Activated B cell treated with CpG ODN at 0.5 μM for 24 hours (primary cell): ENCODE measurements at regions of chr6 and their contacts with region 1.

Region 1: GRCh38 chr6:107674995-107675738 is 148.9 kb downstream of the SCML4 start:
- DNase-seq: peak; percentile 78
- ATAC-seq: peak; percentile 91
- H3K4me3 Mint-ChIP-seq: peak overlapping the region; percentile 82
- H3K27ac Mint-ChIP-seq: peak overlapping the region; percentile 95
- H3K4me1 Mint-ChIP-seq: peaks cover 28% of the 10 kb centered on the region
- H3K27me3 Mint-ChIP-seq: peaks cover 3% of the 10 kb centered on the region
- CTCF ChIP-seq: peak; percentile 67

Region 2: GRCh38 chr6:107033126-107033525 is 642.0 kb before region 1 on chr6:
- CTCF ChIA-PET with region 1: no interaction called
- POLR2A ChIA-PET with region 1: no interaction called
- intact Hi-C with region 1: loop called (anchors 1 kb)
- DNase-seq: no peak
- ATAC-seq: no peak
- H3K4me3 Mint-ChIP-seq: no peak overlapping the region
- H3K27ac Mint-ChIP-seq: no peak overlapping the region
- H3K4me1 Mint-ChIP-seq: peaks cover 21% of the 10 kb centered on the region
- H3K27me3 Mint-ChIP-seq: no peaks in the 10 kb centered on the region
- CTCF ChIP-seq: no peak

Region 3: DNA sequence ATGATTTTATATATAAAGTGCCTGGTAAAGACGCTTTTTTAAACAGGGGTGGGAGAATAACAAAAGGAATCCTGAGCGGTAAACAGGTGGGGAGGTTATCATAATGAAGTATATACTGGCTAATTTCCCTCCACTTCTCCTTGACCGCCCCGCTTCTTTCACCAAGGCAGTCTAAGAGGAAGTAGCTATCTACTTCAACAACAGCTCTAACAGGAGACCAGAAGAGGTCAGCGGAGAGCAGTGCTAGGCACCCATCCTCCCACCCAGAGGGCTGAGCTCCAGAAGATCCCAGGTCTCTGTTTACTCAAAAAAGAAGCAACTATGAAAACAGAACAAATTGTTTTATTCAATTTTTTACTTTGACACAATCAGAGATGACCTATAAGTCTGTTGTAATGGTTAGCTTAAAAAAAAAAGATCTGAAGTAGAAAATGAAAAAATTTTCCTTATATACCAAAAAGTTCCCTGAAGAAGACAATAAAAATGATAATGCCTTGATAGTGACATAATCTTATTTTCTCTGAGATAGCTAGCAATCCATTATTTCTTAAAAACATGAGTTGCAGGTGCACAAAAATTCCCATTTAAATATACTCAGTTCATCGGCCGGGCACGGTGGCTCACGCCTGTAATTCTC is 356.9 kb before region 1 on chr6:
- CTCF ChIA-PET with region 1: interaction called, 51 read pairs
- POLR2A ChIA-PET with region 1: interaction called, 3 read pairs
- intact Hi-C with region 1: loop called (anchors 1 kb)
- DNase-seq: no peak
- ATAC-seq: peak; percentile 85
- H3K4me3 Mint-ChIP-seq: no peak overlapping the region
- H3K27ac Mint-ChIP-seq: no peak overlapping the region
- H3K4me1 Mint-ChIP-seq: peaks cover 15% of the 10 kb centered on the region
- H3K27me3 Mint-ChIP-seq: no peaks in the 10 kb centered on the region
- CTCF ChIP-seq: no peak

Region 4: DNA sequence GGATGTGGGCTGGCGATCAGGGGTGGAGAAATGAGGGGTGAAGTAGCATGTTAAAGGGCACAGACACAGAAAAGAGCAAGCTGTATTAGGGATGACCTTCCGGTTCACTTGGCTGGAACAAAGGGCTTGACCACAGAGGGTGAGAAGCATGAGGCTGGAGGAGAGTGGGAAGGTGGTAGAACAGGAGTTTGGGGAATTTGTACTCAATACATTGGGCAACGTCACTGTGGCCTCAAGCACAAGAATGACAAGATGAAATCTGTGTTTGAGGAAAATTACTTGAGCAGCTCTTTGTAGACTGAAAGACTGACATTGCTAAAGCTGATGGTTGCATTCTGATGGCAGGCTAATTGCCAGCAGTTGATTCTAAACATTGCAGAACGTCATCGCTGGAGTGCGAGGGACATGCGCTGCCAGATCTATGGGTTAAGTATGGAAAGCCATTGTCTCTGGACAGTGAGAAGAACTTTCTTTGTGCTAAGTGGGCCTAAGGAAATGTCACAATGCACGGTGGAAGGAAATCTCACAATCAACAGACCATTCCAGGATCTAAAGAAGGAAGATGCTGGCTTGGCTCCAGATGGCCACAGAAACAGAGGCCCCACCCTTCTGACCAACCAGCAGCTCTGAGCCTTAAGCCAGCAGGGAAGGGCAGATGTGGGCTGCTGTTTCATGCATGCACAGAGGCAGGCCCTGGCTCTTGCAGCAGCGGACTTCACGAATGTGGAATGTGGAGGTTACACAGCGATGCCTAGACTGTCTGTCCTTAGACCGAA is 29.2 kb before region 1 on chr6:
- CTCF ChIA-PET with region 1: interaction called, 6 read pairs
- POLR2A ChIA-PET with region 1: interaction called, 4 read pairs
- intact Hi-C with region 1: loop called (anchors 2 kb)
- DNase-seq: no peak
- ATAC-seq: no peak
- H3K4me3 Mint-ChIP-seq: no peak overlapping the region
- H3K27ac Mint-ChIP-seq: no peak overlapping the region
- H3K4me1 Mint-ChIP-seq: peaks cover 65% of the 10 kb centered on the region
- H3K27me3 Mint-ChIP-seq: no peaks in the 10 kb centered on the region
- CTCF ChIP-seq: no peak

Region 5: DNA sequence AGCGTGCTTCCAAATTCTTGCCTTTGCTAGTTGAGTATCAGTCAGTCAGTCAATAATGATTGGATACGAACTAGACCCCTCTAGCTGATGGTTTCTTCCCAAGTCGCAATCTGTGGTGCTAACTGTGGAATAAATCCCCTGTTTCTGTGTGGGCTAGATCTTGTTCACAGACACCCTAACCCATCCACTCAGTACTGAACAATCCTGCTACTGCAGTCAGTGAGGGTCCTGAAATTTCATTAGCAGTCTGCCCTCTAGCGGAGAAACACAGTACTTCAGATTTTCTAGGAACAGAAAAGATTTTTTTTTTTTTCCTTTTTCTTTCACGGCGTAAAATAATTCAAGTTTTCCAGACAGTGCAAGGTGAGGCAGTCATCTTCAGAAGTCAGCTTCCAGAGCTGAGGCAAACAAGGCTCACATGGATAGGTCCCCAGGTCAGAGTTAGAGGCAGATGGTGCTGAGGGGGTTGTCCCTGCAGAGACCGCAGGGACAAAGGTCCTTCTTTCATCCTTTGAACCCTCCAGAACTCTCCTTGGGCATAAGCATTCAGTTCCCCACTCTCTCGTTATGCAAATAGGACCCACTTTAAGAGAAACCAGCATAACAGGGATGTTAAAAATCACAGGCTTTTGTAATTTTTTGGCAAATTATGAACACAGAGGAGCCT is 29.3 kb after region 1 on chr6:
- CTCF ChIA-PET with region 1: interaction called, 3 read pairs
- POLR2A ChIA-PET with region 1: no interaction called
- intact Hi-C with region 1: loop called (anchors 1 kb)
- DNase-seq: no peak
- ATAC-seq: no peak
- H3K4me3 Mint-ChIP-seq: no peak overlapping the region
- H3K27ac Mint-ChIP-seq: no peak overlapping the region
- H3K4me1 Mint-ChIP-seq: peaks cover 2% of the 10 kb centered on the region
- H3K27me3 Mint-ChIP-seq: peaks cover 2% of the 10 kb centered on the region
- CTCF ChIP-seq: peak; percentile 88

Region 6: GRCh38 chr6:107866606-107867301 is 191.6 kb after region 1 on chr6:
- CTCF ChIA-PET with region 1: interaction called, 7 read pairs
- POLR2A ChIA-PET with region 1: no interaction called
- intact Hi-C with region 1: loop called (anchors 1 kb)
- DNase-seq: no peak
- ATAC-seq: peak; percentile 49
- H3K4me3 Mint-ChIP-seq: peak overlapping the region; percentile 66
- H3K27ac Mint-ChIP-seq: no peak overlapping the region
- H3K4me1 Mint-ChIP-seq: peaks cover 45% of the 10 kb centered on the region
- H3K27me3 Mint-ChIP-seq: peaks cover 3% of the 10 kb centered on the region
- CTCF ChIP-seq: no peak

Region 7: GRCh38 chr6:108526739-108527174 is 851.6 kb after region 1 on chr6:
- CTCF ChIA-PET with region 1: no interaction called
- POLR2A ChIA-PET with region 1: no interaction called
- intact Hi-C with region 1: loop called (anchors 5 kb)
- DNase-seq: no peak
- ATAC-seq: peak; percentile 45
- H3K4me3 Mint-ChIP-seq: no peak overlapping the region
- H3K27ac Mint-ChIP-seq: no peak overlapping the region
- H3K4me1 Mint-ChIP-seq: no peaks in the 10 kb centered on the region
- H3K27me3 Mint-ChIP-seq: no peaks in the 10 kb centered on the region
- CTCF ChIP-seq: peak; percentile 79